ENCODE measurements at regions of chr9 and their contacts with region 1.

Region 1: GRCh38 chr9:98255578-98256296 is at the start of gene TBC1D2:
- DNase-seq: peak; percentile 98
- ATAC-seq: peak; percentile 86
- H3K4me3 Mint-ChIP-seq: peak within 1 kb of the TSS; percentile 79
- H3K27ac Mint-ChIP-seq: peak within 1 kb of the TSS; percentile 98
- H3K4me1 Mint-ChIP-seq: peaks cover 17% of the 10 kb centered on the region
- H3K27me3 Mint-ChIP-seq: peaks cover 13% of the 10 kb centered on the region
- total RNA-seq, gene TBC1D2: 3.0 to 3.5 TPM

Region 2: DNA sequence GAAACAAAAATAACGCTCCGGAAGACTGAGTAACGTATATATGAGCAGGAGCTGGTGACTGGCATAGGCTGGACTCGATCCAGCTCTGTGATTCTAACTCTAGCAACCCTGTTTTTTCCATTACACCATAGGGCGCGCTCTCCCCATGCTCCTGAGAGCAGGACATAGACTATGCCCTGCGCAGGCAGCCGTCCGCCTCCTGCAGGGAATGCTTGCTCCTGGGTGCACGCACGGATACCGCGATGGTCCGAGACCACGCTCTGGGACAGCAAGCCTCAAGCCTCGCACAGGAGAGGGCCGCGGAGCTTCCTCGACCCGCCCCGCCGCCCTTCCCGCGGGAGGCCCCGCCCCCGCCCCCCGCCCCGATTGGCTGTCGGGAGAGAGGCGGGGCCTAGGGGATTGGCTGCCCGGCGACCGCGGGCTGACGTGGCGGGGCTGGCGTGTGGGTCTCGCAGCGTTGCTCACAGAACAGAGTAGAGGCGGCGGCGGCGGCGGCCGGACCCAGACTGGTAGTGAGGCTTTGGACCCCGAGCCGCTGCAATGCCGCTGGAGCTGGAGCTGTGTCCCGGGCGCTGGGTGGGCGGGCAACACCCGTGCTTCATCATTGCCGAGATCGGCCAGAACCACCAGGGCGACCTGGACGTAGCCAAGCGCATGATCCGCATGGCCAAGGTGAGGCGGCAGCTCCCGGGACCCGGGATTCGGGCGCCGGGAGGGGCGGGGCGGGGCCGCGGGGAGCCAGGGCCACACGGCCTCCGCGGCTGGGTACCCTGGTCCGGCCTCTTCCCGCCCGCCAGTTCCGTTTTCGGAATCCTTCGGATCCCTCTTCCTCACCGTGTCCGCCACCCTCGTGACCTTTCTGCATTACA is 199.2 kb before region 1 on chr9 and contains the start of gene NANS:
- CTCF ChIA-PET with region 1: interaction called, 4 read pairs
- POLR2A ChIA-PET with region 1: interaction called, 23 read pairs
- DNase-seq: peak; percentile 95
- ATAC-seq: peak; percentile 95
- H3K4me3 Mint-ChIP-seq: peak within 1 kb of the TSS; percentile 99
- H3K27ac Mint-ChIP-seq: peak within 1 kb of the TSS; percentile 99
- H3K4me1 Mint-ChIP-seq: peaks cover 39% of the 10 kb centered on the region
- H3K27me3 Mint-ChIP-seq: no peaks in the 10 kb centered on the region
- total RNA-seq, gene NANS: 45.5 to 46.6 TPM

Region 3: GRCh38 chr9:98101868-98102273 is 153.9 kb before region 1 on chr9:
- CTCF ChIA-PET with region 1: interaction called, 8 read pairs
- POLR2A ChIA-PET with region 1: interaction called, 22 read pairs
- DNase-seq: peak; percentile 93
- ATAC-seq: peak; percentile 98
- H3K4me3 Mint-ChIP-seq: peak overlapping the region; percentile 79
- H3K27ac Mint-ChIP-seq: peak overlapping the region; percentile 99
- H3K4me1 Mint-ChIP-seq: peaks cover 86% of the 10 kb centered on the region
- H3K27me3 Mint-ChIP-seq: no peaks in the 10 kb centered on the region

Region 4: GRCh38 chr9:98192503-98193335 is 63.0 kb before region 1 on chr9 and contains the start of gene CORO2A:
- CTCF ChIA-PET with region 1: interaction called, 5 read pairs
- POLR2A ChIA-PET with region 1: interaction called, 12 read pairs
- DNase-seq: peak; percentile 76
- ATAC-seq: peak; percentile 89
- H3K4me3 Mint-ChIP-seq: peak within 1 kb of the TSS; percentile 82
- H3K27ac Mint-ChIP-seq: peak within 1 kb of the TSS; percentile 55
- H3K4me1 Mint-ChIP-seq: peaks cover 30% of the 10 kb centered on the region
- H3K27me3 Mint-ChIP-seq: no peaks in the 10 kb centered on the region
- total RNA-seq, gene CORO2A: 9.2 TPM

Measured in activated CD8-positive, alpha-beta T cell treated with anti-CD3 and anti-CD28 coated beads, Interleukin-2, amount 10 ng/mL, durations not matched to agents 7 days and 5 days (primary cell).